Dorsolateral prefrontal cortex (tissue), 120 donors: ENCODE measurements at regions of chr6 and their contacts with region 1.

Region 1: DNA sequence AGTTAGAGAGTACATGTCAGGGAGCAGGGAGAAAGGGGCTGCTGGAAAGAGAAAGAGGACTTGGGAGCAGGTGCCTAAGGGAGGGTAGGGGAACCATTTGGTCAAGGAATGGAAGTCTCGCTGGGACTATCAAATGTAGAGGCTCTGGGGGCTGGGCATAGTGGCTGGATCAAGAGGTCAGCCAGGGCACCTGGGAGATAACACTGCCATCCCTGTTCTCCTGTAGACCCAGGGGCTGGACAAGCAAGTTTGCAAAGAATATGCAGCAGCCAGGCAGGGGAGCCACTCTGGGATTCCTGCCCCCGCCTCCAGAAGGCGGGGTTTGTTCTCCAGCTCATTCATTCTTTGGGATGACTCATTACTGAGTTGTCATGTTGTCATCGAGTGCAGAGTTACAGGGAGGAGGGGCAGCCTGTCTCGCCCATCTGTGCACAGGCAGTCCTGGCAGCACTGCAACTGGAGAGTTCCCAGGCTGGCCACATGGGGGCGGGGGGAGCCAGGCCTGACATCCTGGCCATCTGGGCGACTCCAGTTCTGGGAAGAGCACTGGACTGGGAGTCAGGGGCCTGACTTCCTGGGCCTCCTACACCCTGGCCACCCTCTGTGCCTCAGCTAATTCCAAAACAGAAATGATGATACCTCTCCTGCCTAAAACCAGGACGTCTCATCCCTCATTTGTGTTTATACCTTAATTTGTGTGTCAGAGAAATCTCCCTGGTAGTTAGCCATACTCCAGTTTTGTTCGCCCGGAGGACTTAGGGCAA is 28.2 kb upstream of the ZFAND3 start:
- DNase-seq: peak; percentile 92 to 97 (median 95)
- H3K4me3 ChIP-seq: peak overlapping the region in 7 of 59 donors; percentile 1 to 36 (median 30)
- H3K27ac ChIP-seq: peak overlapping the region in 3 of 59 donors; percentile 27 to 49 (median 28)
- H3K27me3 ChIP-seq: no peaks in the 10 kb centered on the region
- CTCF ChIP-seq: peak; percentile 67 to 97 (median 93)

Region 2: GRCh38 chr6:37705239-37706051 is 85.9 kb before region 1 on chr6:
- intact Hi-C with region 1: loop called (anchors 2 to 5 kb)
- DNase-seq: peak; percentile 71 to 88 (median 82)
- H3K4me3 ChIP-seq: peak overlapping the region; percentile 30 to 75 (median 57)
- H3K27ac ChIP-seq: peak overlapping the region; percentile 25 to 93 (median 83)
- H3K27me3 ChIP-seq: no peaks in the 10 kb centered on the region
- CTCF ChIP-seq: peak; percentile 50 to 91 (median 76)

Region 3: DNA sequence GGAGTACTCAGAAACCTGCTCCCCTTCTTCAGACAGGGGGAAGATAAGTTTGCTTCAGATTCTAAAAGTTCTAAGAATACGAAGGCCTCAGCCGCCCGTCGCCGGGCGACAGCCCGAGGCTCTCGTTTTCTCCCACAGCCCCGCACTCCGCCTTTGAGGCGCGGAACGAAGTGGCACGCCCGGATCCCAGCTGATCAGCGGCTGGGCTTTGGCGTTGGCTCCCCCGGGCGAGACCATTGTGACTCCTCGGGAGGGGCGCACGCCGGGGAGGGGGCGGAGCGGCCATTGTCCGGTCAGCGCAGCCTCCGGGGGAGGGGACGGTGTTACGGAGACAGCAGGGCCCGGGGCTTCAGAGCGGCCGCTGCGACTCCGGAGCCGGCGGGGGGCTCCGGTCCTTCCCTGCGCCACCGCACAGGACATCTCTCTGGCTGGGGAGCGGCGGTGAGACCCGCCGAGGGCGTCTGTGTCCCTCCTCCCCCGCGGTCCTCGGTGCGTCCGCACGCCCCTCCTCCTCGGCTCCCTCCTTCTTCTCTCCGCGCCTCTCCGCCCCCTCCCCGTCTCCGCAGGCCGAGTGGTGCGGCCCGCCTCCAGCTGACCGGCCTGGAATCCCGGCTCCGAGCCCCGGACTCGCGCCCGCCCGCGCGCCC is 28.0 kb after region 1 on chr6 and contains the start of gene ZFAND3:
- intact Hi-C with region 1: loop called (anchors 2 kb)
- DNase-seq: peak; percentile 90 to 98 (median 94)
- H3K4me3 ChIP-seq: peak within 1 kb of the TSS; percentile 66 to 96 (median 86)
- H3K27ac ChIP-seq: peak within 1 kb of the TSS; percentile 92 to 100 (median 99)
- H3K27me3 ChIP-seq: no peaks in the 10 kb centered on the region
- CTCF ChIP-seq: peak in 11 of 56 donors; percentile 4 to 30 (median 9)
- total RNA-seq, gene ZFAND3: 48.5 to 106 (median 70.2) TPM

Region 4: DNA sequence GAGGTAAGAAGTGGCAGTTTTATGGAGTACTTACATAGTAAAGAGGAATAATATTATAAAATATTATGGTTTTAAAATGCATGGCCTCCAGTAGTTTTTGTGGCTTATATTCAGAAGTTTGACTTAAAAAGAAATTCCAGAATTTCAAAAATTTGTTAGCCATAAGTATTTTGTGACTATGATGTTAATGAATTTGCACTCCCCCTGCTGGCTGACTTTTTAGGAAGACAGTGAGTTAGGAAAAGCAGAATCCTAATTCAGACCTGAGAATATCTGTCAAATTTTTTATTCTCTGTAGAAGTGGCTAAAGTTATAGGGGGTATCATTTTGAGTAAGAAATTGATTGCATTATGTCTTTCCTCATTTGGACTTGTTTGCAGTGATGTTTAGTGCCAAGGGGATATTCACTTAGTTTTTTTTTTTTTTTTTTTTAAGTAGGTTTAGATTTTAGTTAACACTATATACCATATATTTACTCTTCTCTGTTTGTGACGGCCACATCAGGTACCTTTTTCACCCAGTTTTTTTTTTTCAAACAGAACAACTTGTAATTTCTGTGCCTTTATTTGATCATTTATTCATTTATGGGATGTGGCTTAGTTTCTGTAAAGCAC is 69.0 kb after region 1 on chr6:
- intact Hi-C with region 1: loop called (anchors 5 to 10 kb)
- DNase-seq: peak in 3 of 10 donors; percentile 11 to 39 (median 29)
- H3K4me3 ChIP-seq: no peak overlapping the region
- H3K27ac ChIP-seq: no peak overlapping the region
- H3K27me3 ChIP-seq: no peaks in the 10 kb centered on the region
- CTCF ChIP-seq: peak; percentile 46 to 78 (median 66)

Region 5: GRCh38 chr6:38012573-38012972 is 221.2 kb after region 1 on chr6:
- intact Hi-C with region 1: loop called (anchors 1 to 5 kb)
- DNase-seq: peak in 4 of 10 donors; percentile 19 to 47 (median 36)
- H3K4me3 ChIP-seq: no peak overlapping the region
- H3K27ac ChIP-seq: no peak overlapping the region
- H3K27me3 ChIP-seq: no peaks in the 10 kb centered on the region
- CTCF ChIP-seq: peak; percentile 32 to 80 (median 64)